ENCODE measurements at regions of chr7 and their contacts with region 1.

Region 1: DNA sequence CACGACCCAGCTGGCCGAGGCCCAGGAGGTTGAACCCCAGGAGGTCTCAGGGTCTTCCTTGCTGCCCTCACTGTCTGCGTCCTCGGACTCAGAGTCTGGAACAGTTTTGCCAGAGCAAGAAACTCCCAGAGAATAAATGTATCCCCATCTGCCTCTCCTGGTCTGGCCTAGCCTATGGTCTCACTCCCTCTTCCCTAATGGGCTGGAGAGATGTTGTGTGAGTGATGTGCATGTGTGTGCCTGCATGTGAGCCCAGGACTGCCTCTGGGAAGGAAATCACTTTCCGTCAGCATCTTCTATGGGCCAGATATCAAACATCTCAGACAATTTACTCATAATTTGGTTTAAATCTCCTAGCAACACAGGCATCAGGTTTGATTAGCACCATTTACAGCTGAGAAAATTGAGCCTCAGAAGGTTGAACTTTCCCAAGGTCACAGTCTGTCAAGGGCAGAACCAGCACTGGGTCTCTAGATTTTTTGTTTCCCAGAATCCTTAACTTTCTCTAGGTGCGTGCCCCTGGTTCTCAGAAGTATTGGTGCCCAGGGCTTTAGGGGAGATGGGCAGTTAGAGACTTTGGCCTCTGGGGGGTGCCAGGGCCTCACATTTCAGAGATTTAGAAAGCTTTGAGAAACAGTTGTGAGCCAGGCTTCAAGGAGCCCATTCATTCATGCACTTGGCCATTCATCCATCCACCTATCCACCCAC is 4.9 kb downstream of the TMEM270 start:
- DNase-seq: peak in 1 of 2 donors; percentile 49
- H3K4me3 ChIP-seq: no peak overlapping the region
- H3K27ac ChIP-seq: no peak overlapping the region
- H3K4me1 ChIP-seq: peaks cover 4 to 31% (median 26%) of the 10 kb centered on the region in 4 donors
- H3K27me3 ChIP-seq: no peaks in the 10 kb centered on the region
- CTCF ChIP-seq: peak; percentile 75 to 84

Region 2: DNA sequence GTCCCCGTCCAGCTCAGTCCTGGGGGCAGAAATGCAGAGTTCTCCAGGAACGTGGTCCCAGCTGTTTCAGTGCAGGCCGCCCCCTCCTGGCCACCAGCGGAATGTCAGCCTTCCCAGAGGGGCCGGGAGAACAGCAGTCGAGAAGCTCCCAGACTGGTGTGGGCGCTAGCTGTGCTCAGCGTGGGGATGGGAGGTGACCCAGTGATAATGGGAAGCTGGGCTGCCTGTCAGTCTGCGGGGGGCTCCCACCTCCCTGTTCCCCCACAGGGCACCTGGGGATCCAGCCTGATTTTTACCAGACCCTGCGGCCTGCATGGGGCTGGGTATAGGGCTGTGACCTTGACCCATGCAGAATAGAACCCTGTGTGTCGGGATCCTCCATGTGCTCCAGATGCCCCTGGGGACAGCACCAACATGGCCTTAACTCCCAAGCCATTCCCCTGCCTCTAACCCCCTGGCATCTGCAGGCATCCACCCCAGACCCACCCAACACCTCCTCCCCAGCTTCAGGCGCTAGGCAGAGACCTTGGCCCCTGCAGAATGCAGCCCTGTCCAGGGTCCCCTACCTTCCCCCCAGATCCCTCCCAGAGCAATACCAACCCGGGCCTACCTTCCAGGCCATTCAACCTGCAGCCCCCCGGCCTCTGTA is 161.1 kb after region 1 on chr7:
- intact Hi-C with region 1: loop called (anchors 2 kb)
- DNase-seq: peak; percentile 92 to 94
- H3K4me3 ChIP-seq: peak overlapping the region; percentile 80 to 93
- H3K27ac ChIP-seq: peak overlapping the region; percentile 98
- H3K4me1 ChIP-seq: peaks cover 3 to 89% (median 67%) of the 10 kb centered on the region in 4 donors
- H3K27me3 ChIP-seq: no peaks in the 10 kb centered on the region
- CTCF ChIP-seq: peak; percentile 98 to 99

Region 3: GRCh38 chr7:74187915-74188630 is 322.2 kb after region 1 on chr7:
- intact Hi-C with region 1: loop called (anchors 5 kb)
- DNase-seq: no peak
- H3K4me3 ChIP-seq: no peak overlapping the region
- H3K27ac ChIP-seq: no peak overlapping the region
- H3K4me1 ChIP-seq: peaks cover 0 to 59% (median 45%) of the 10 kb centered on the region in 4 donors
- H3K27me3 ChIP-seq: no peaks in the 10 kb centered on the region
- CTCF ChIP-seq: no peak

Region 4: DNA sequence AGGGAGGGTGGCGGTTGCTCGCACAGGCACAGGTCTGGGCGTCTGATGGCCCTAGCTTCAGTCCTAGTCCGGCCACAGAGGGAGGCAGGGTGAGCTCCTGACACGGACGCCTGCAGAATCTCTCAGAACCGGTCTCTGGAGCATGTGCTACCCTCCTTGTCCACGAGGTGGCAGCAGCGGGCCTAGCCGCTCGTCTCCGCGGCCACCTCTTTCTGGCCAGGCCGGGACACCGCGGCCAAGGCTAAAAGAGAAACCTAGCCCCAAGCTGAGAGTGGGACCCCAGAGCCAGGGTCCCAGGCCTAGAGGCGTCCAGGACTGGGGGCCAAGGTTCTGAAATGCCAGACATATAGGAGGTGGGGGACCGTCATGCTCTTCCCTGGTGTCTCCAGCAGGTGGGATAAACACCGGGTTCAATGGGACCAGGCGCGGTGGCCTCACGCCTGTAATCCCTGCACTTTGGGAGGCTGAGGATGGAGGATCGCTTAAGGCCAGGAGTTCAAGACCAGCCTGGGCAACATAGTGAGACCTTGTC is 340.8 kb after region 1 on chr7:
- intact Hi-C with region 1: loop called (anchors 5 kb)
- DNase-seq: peak; percentile 83 to 91
- H3K4me3 ChIP-seq: peak overlapping the region; percentile 20 to 30
- H3K27ac ChIP-seq: no peak overlapping the region
- H3K4me1 ChIP-seq: peaks cover 0 to 23% (median 4%) of the 10 kb centered on the region in 4 donors
- H3K27me3 ChIP-seq: peaks cover 0 to 5% of the 10 kb centered on the region in 2 donors
- CTCF ChIP-seq: peak; percentile 95 to 98

Region 5: GRCh38 chr7:74306730-74307469 is 441.0 kb after region 1 on chr7:
- intact Hi-C with region 1: no loop called
- DNase-seq: peak; percentile 45 to 81
- H3K4me3 ChIP-seq: peak overlapping the region; percentile 39 to 45
- H3K27ac ChIP-seq: peak overlapping the region; percentile 58 to 67
- H3K4me1 ChIP-seq: peaks cover 6 to 44% (median 25%) of the 10 kb centered on the region in 4 donors
- H3K27me3 ChIP-seq: no peaks in the 10 kb centered on the region
- CTCF ChIP-seq: no peak

Region 6: GRCh38 chr7:74401137-74401859 is 535.4 kb after region 1 on chr7:
- intact Hi-C with region 1: loop called (anchors 5 kb)
- DNase-seq: peak; percentile 61 to 75
- H3K4me3 ChIP-seq: no peak overlapping the region
- H3K27ac ChIP-seq: no peak overlapping the region
- H3K4me1 ChIP-seq: no peaks in the 10 kb centered on the region
- H3K27me3 ChIP-seq: no peaks in the 10 kb centered on the region
- CTCF ChIP-seq: peak; percentile 95 to 98